Activated naive CD4-positive, alpha-beta T cell treated with anti-CD3 and anti-CD28 coated beads for 36 hours (primary cell): ENCODE measurements at regions of chr4 and their contacts with region 1.

Region 1: GRCh38 chr4:108570993-108571569 is 49.3 kb upstream of the RPL34 start:
- DNase-seq: no peak
- H3K4me3 Mint-ChIP-seq: no peak overlapping the region
- H3K27ac Mint-ChIP-seq: no peak overlapping the region
- H3K4me1 Mint-ChIP-seq: peaks cover 24% of the 10 kb centered on the region
- H3K27me3 Mint-ChIP-seq: no peaks in the 10 kb centered on the region

Region 2: GRCh38 chr4:107913281-107913899 is 657.7 kb before region 1 on chr4:
- CTCF ChIA-PET with region 1: no interaction called
- intact Hi-C with region 1: loop called (anchors 5 kb)
- DNase-seq: peak; percentile 47
- H3K4me3 Mint-ChIP-seq: no peak overlapping the region
- H3K27ac Mint-ChIP-seq: no peak overlapping the region
- H3K4me1 Mint-ChIP-seq: peaks cover 3% of the 10 kb centered on the region
- H3K27me3 Mint-ChIP-seq: no peaks in the 10 kb centered on the region

Region 3: DNA sequence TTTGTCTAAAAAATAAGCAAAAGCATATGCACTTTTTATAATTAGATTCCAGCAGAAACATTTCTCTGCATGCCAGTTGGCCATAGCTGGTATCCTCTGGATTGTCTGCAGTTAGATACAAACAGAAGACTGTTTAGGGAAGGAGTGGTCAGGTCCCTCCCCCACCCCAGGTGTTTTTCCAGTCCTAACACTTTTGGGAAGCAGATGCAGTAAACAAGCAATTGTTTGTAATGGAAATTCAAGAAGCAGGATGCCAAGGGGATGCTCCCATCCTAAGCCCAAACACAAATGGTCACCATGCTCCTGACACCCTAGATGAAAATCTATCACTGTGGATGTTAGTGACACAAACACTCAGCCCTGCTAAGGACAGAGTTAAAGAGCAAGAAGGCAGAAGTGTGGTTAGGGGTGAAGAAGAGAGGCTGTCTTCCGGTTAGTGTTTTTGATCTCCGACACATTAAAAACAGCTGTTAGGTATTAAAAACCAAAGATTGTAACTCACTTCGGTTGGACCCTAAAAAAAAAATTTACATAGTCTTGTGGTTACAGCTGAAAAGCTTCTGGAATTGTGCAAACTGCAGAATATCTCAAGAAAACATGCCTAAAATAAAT is 410.2 kb before region 1 on chr4:
- CTCF ChIA-PET with region 1: interaction called, 15 read pairs
- intact Hi-C with region 1: no loop called
- DNase-seq: no peak
- H3K4me3 Mint-ChIP-seq: peak overlapping the region; percentile 57
- H3K27ac Mint-ChIP-seq: peak overlapping the region; percentile 97
- H3K4me1 Mint-ChIP-seq: peaks cover 58% of the 10 kb centered on the region
- H3K27me3 Mint-ChIP-seq: no peaks in the 10 kb centered on the region

Region 4: GRCh38 chr4:108396900-108397497 is 174.1 kb before region 1 on chr4:
- CTCF ChIA-PET with region 1: interaction called, 14 read pairs
- intact Hi-C with region 1: no loop called
- DNase-seq: no peak
- H3K4me3 Mint-ChIP-seq: no peak overlapping the region
- H3K27ac Mint-ChIP-seq: no peak overlapping the region
- H3K4me1 Mint-ChIP-seq: peaks cover 10% of the 10 kb centered on the region
- H3K27me3 Mint-ChIP-seq: no peaks in the 10 kb centered on the region

Region 5: GRCh38 chr4:108512615-108513505 is 58.2 kb before region 1 on chr4:
- CTCF ChIA-PET with region 1: interaction called, 12 read pairs
- intact Hi-C with region 1: loop called (anchors 1 kb)
- DNase-seq: peak; percentile 72
- H3K4me3 Mint-ChIP-seq: peak overlapping the region; percentile 75
- H3K27ac Mint-ChIP-seq: peak overlapping the region; percentile 72
- H3K4me1 Mint-ChIP-seq: peaks cover 17% of the 10 kb centered on the region
- H3K27me3 Mint-ChIP-seq: no peaks in the 10 kb centered on the region

Region 6: DNA sequence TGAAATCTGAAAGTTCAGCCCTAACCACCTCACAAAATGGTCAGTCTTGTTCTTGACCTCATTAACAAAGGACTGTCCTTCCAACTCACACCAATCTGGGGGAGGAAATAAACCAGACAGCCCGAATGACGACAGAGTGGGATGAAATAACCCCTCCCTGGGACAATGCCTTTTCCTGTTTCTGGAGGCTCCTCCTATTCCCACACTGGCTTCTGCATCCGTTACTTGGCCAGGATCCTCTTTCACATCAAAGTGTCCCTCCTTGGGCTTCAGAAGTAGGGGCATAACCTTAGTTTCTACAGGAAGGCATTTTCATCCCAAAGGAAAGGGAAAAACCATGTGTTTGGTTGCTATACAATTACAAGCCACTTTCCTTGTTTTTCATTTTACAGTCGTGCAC is 10.5 kb before region 1 on chr4:
- CTCF ChIA-PET with region 1: interaction called, 22 read pairs
- intact Hi-C with region 1: no loop called
- DNase-seq: no peak
- H3K4me3 Mint-ChIP-seq: no peak overlapping the region
- H3K27ac Mint-ChIP-seq: no peak overlapping the region
- H3K4me1 Mint-ChIP-seq: peaks cover 8% of the 10 kb centered on the region
- H3K27me3 Mint-ChIP-seq: no peaks in the 10 kb centered on the region